ENCODE measurements at regions of chr19 and their contacts with region 1.

Region 1: DNA sequence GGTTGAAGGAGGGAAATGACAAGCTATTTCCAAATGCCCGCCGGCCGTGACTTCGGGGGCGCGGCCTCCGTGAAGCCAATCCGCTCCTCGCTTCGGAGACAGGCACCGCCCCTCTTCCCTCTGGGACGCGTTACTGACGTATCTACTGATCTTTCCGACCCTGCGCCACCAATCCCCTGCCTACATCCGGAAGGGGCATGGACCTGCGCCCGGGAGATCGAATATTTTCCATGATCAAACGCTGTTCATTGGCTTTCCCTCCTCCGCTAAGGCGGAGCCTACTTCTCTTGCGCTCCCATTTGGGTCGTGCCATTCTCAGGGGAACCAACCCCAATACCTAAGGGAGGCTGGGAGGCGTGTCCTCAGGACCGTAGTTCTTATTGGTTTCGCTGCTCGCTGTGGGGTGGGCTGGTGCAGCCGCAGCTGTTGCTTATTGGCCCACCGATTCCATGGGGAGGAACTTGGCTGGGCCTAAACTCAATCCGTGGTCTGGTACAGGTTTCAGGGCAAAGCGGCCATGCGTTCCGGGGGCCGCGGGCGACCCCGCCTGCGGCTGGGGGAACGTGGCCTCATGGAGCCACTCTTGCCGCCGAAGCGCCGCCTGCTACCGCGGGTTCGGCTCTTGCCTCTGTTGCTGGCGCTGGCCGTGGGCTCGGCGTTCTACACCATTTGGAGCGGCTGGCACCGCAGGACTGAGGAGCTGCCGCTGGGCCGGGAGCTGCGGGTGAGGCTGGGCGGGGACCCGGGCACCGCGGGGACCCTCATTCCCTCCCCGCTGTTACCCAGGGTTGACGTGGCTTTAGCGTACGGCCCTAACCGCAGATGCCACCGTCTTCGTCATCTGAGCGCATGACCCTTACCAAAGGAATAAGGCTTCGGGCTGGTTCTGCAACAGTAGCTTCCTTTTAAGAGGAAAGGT is at the start of gene QPCTL:
- DNase-seq: peak; percentile 100
- H3K4me3 ChIP-seq: peak within 1 kb of the TSS; percentile 70 to 93 (median 85)
- H3K27ac ChIP-seq: peak within 1 kb of the TSS; percentile 82
- H3K4me1 ChIP-seq: peaks cover 9% of the 10 kb centered on the region
- H3K27me3 ChIP-seq: no peaks in the 10 kb centered on the region
- CTCF ChIP-seq: no peak
- POLR2A ChIP-seq: peak; percentile 76
- total RNA-seq, gene QPCTL: 15.3 and 17.6 TPM in 2 replicates

Region 2: GRCh38 chr19:45439569-45440254 is 252.7 kb before region 1 on chr19:
- CTCF ChIA-PET with region 1: interaction called, 13 read pairs
- POLR2A ChIA-PET with region 1: no interaction called
- dilution Hi-C with region 1: no loop called
- intact Hi-C with region 1: no loop called
- DNase-seq: peak; percentile 65
- H3K4me3 ChIP-seq: peak overlapping the region; percentile 48 to 64 (median 52)
- H3K27ac ChIP-seq: peak overlapping the region; percentile 59
- H3K4me1 ChIP-seq: peaks cover 15% of the 10 kb centered on the region
- H3K27me3 ChIP-seq: no peaks in the 10 kb centered on the region
- CTCF ChIP-seq: peak; percentile 88 to 99
- POLR2A ChIP-seq: no peak

Region 3: GRCh38 chr19:45577111-45577905 is 115.1 kb before region 1 on chr19:
- CTCF ChIA-PET with region 1: no interaction called
- POLR2A ChIA-PET with region 1: no interaction called
- dilution Hi-C with region 1: no loop called
- intact Hi-C with region 1: no loop called
- DNase-seq: no peak
- H3K4me3 ChIP-seq: no peak overlapping the region
- H3K27ac ChIP-seq: no peak overlapping the region
- H3K4me1 ChIP-seq: peaks cover 9% of the 10 kb centered on the region
- H3K27me3 ChIP-seq: no peaks in the 10 kb centered on the region
- CTCF ChIP-seq: no peak
- POLR2A ChIP-seq: no peak

Region 4: GRCh38 chr19:45591004-45591637 is 101.3 kb before region 1 on chr19:
- CTCF ChIA-PET with region 1: interaction called, 5 read pairs
- POLR2A ChIA-PET with region 1: no interaction called
- dilution Hi-C with region 1: no loop called
- intact Hi-C with region 1: loop called (anchors 5 kb)
- DNase-seq: no peak
- H3K4me3 ChIP-seq: no peak overlapping the region
- H3K27ac ChIP-seq: no peak overlapping the region
- H3K4me1 ChIP-seq: peaks cover 20% of the 10 kb centered on the region
- H3K27me3 ChIP-seq: no peaks in the 10 kb centered on the region
- CTCF ChIP-seq: peak; percentile 14 to 42
- POLR2A ChIP-seq: no peak

Region 5: GRCh38 chr19:45711851-45712698 is 19.6 kb after region 1 on chr19:
- CTCF ChIA-PET with region 1: interaction called, 15 read pairs
- POLR2A ChIA-PET with region 1: interaction called, 10 read pairs
- dilution Hi-C with region 1: no loop called
- intact Hi-C with region 1: loop called (anchors 1 kb)
- DNase-seq: no peak
- H3K4me3 ChIP-seq: no peak overlapping the region
- H3K27ac ChIP-seq: no peak overlapping the region
- H3K4me1 ChIP-seq: peaks cover 7% of the 10 kb centered on the region
- H3K27me3 ChIP-seq: no peaks in the 10 kb centered on the region
- CTCF ChIP-seq: no peak
- POLR2A ChIP-seq: no peak

Region 6: GRCh38 chr19:45730389-45731288 is 38.2 kb after region 1 on chr19 and contains the start of gene FBXO46:
- CTCF ChIA-PET with region 1: interaction called, 13 read pairs
- POLR2A ChIA-PET with region 1: no interaction called
- dilution Hi-C with region 1: no loop called
- intact Hi-C with region 1: loop called (anchors 1 kb)
- DNase-seq: peak; percentile 99
- H3K4me3 ChIP-seq: peak within 1 kb of the TSS; percentile 81 to 83 (median 82)
- H3K27ac ChIP-seq: peak within 1 kb of the TSS; percentile 28
- H3K4me1 ChIP-seq: peaks cover 6% of the 10 kb centered on the region
- H3K27me3 ChIP-seq: no peaks in the 10 kb centered on the region
- CTCF ChIP-seq: peak in 1 of 2 donors; percentile 36
- POLR2A ChIP-seq: peak; percentile 30
- total RNA-seq, gene FBXO46: 18.3 and 21.2 TPM in 2 replicates

Region 7: DNA sequence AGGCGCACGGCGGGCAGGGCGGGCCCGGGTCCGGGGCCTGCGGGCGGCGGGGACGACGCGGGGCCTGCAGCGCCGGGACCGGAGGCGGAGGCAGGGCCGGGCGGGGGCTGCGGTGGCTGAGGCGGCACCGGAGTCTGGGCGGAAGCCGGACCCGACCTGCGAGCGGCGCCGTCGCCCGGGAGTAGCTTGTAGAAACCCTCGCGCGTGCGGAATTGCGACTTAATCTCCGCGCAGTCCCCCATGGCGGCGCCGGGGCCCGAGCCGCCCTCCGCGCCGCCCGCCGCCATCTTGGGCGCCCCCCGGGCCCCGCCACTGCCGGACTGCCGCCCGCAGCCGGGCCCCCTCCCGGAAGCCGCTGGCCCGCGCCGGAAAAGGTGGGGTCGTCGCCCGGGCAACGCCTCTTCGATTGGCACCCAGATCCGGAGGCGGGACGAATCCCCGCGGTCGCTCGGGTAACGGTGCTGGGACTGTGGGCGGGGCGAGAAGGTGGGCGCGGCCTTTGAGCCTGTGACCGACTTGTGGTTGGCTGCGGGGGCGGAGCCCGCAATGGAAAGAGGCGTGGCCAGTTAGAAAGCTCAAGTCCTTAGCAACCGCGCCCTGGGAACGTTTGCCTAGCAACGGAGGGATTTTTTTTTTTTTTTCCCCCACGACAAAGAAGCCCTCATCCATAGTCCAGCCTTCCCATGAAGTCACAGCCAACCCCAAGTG is 100.2 kb after region 1 on chr19 and contains the start of gene DMWD:
- CTCF ChIA-PET with region 1: no interaction called
- POLR2A ChIA-PET with region 1: no interaction called
- dilution Hi-C with region 1: no loop called
- intact Hi-C with region 1: loop called (anchors 1 kb)
- DNase-seq: peak; percentile 99
- H3K4me3 ChIP-seq: peak within 1 kb of the TSS; percentile 83 to 88 (median 85)
- H3K27ac ChIP-seq: peak within 1 kb of the TSS; percentile 57
- H3K4me1 ChIP-seq: peaks cover 16% of the 10 kb centered on the region
- H3K27me3 ChIP-seq: no peaks in the 10 kb centered on the region
- CTCF ChIP-seq: no peak
- POLR2A ChIP-seq: peak; percentile 89
- total RNA-seq, gene DMWD: 81.1 and 81.6 TPM in 2 replicates

Measured in endothelial cell of umbilical vein (primary cell).